Adrenal gland (tissue), 19 donors: ENCODE measurements at regions of chr1 and their contacts with region 1.

Region 1: GRCh38 chr1:198265073-198265661 is 108.4 kb downstream of the NEK7 start:
- DNase-seq: no peak
- H3K4me3 ChIP-seq: no peak overlapping the region
- H3K27ac ChIP-seq: peak overlapping the region in 2 of 5 donors; percentile 1 to 3
- H3K4me1 ChIP-seq: peaks cover 14 to 54% of the 10 kb centered on the region in 2 donors
- H3K27me3 ChIP-seq: no peaks in the 10 kb centered on the region
- CTCF ChIP-seq: no peak
- POLR2A ChIP-seq: no peak

Region 2: DNA sequence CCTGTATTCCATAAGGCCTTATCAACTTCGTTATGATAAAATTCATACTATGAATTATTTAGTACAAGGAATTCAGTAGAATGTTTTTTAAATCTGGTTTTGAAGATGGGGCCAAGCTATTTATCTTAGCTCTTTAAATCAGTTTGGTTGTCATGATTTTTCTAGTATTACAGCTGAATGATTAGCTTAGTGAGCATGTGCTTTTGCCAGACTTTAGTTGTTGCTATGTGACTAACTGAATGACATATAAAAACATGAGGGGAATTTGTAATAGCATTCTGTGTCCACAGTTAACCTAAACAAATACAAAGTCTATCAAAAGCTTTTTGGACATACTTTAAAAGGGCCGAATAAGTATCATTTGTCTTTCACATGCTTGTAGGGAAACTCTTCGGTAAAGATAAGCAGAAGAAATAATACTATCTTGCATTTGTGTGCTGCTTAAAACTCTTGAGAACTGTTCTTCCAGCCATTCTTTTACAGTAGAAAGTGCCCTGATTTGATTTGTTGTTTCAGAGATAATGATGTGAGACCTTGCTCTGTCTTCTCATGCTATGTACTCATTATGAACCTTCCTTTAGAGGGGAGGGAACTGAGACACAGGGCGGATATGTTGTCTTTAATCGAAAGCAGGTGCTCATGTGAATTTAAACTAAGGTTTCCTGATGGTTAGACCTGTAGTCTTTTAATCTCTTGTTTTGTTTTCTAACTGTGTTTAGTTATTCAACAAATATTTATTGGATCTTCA is 89.6 kb before region 1 on chr1:
- intact Hi-C with region 1: loop called in 1 of 2 experiments (anchors 10 kb)
- DNase-seq: no peak
- H3K4me3 ChIP-seq: no peak overlapping the region
- H3K27ac ChIP-seq: peak overlapping the region in 4 of 5 donors; percentile 13 to 42 (median 30)
- H3K4me1 ChIP-seq: peaks cover 64 to 97% of the 10 kb centered on the region in 2 donors
- H3K27me3 ChIP-seq: no peaks in the 10 kb centered on the region
- CTCF ChIP-seq: no peak
- POLR2A ChIP-seq: no peak

Region 3: DNA sequence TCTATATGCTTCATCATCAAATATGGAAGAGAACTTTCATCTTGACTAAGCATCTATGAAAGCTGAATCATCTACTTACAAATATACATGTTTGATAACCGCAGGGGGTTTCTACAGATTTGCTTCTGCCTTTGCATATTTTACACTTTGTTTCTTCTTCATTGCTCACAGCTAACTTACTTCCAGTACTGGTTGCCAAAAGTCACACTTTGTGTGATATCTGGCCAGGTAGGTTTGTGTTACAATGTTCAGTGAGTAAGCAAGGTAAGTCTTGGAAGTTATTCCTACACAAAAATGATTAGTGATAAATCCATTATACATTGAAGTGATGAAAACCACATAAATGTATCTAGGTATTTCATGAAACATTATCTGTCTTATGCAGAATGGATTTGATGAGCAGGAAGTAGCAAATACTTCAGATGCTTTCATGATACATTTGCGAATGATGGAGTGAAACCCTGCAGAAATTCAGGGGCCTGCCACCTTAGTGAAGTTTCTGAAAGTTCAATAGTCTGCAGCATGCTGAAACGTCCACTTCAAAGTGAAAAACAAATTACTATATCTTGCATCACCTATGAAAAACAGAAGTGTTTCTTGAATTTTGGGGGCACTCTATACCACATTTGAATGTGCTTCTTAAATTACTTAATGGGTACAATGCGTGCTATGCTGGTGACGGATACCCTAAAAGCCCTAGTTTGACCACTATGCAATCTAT is 88.0 kb after region 1 on chr1:
- intact Hi-C with region 1: no loop called
- DNase-seq: no peak
- H3K4me3 ChIP-seq: no peak overlapping the region
- H3K27ac ChIP-seq: no peak overlapping the region
- H3K4me1 ChIP-seq: no peaks in the 10 kb centered on the region
- H3K27me3 ChIP-seq: no peaks in the 10 kb centered on the region
- CTCF ChIP-seq: no peak
- POLR2A ChIP-seq: no peak

Region 4: GRCh38 chr1:198416296-198416695 is 151.1 kb after region 1 on chr1:
- intact Hi-C with region 1: no loop called
- DNase-seq: peak in 3 of 7 donors; percentile 3 to 16 (median 7)
- H3K4me3 ChIP-seq: no peak overlapping the region
- H3K27ac ChIP-seq: no peak overlapping the region
- H3K4me1 ChIP-seq: no peaks in the 10 kb centered on the region
- H3K27me3 ChIP-seq: no peaks in the 10 kb centered on the region
- CTCF ChIP-seq: no peak
- POLR2A ChIP-seq: no peak